Cardiac septum (tissue), 1 donor: ENCODE measurements at regions of chr19 and their contacts with region 1.

Region 1: GRCh38 chr19:3984908-3985642 is at the start of gene EEF2:
- DNase-seq: peak; percentile 94
- total RNA-seq, gene EEF2: 1,625 TPM

Region 2: GRCh38 chr19:3762501-3763459 is 222.3 kb before region 1 on chr19 and contains the start of gene MRPL54:
- intact Hi-C with region 1: loop called (anchors 5 kb)
- DNase-seq: peak; percentile 100
- total RNA-seq, gene MRPL54: 81.4 TPM

Region 3: GRCh38 chr19:3970808-3971598 is 14.1 kb before region 1 on chr19 and contains the start of gene DAPK3:
- intact Hi-C with region 1: loop called (anchors 2 kb)
- DNase-seq: peak; percentile 99
- total RNA-seq, gene DAPK3: 180 TPM

Region 4: GRCh38 chr19:4007021-4007835 is 22.2 kb after region 1 on chr19 and contains the start of gene PIAS4:
- intact Hi-C with region 1: loop called (anchors 1 kb)
- DNase-seq: peak; percentile 97
- total RNA-seq, gene PIAS4: 18.4 TPM

Region 5: GRCh38 chr19:4182084-4182810 is 197.2 kb after region 1 on chr19 and contains the starts of genes ANKRD24 and SIRT6:
- intact Hi-C with region 1: loop called (anchors 5 kb)
- DNase-seq: peak; percentile 99
- total RNA-seq, gene ANKRD24: 1.6 TPM
- total RNA-seq, gene SIRT6: 14.9 TPM

Region 6: DNA sequence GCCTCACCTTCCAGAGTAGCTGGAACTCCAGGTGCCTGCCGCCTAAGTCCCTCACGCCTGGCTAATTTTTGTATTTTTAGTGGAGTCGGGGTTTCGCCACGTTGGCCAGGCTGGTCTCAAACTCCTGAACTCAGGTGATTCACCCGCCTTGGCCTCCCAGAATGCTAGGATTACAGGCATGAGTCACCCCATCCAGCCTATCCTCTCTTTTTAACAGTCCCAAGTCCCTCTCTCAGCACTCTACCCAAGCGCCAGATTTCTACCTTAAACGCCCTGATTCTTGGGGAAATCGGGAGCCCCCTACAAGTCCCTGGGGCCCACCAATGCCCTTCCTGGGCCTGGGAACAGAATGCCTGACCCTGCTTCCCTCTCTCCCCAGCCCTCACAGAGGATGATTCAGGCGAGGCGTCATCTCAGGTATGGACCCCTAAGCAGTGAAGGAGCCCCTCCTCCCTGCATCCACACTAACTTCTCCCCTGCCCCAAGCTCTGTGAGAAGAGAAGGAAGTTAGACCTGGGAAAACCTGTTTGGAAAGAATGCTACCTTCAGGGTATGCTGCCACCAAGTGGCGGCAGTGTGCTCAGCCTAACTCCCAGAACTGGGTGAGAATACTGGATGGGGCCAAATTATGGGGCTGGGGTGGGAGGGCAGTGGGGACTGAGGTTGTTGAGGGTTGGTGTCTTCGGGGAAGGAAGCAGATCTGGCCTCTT is 223.5 kb after region 1 on chr19:
- intact Hi-C with region 1: loop called (anchors 2 kb)
- DNase-seq: no peak